Psoas muscle (tissue), 8 donors: ENCODE measurements at regions of chr3 and their contacts with region 1.

Region 1: DNA sequence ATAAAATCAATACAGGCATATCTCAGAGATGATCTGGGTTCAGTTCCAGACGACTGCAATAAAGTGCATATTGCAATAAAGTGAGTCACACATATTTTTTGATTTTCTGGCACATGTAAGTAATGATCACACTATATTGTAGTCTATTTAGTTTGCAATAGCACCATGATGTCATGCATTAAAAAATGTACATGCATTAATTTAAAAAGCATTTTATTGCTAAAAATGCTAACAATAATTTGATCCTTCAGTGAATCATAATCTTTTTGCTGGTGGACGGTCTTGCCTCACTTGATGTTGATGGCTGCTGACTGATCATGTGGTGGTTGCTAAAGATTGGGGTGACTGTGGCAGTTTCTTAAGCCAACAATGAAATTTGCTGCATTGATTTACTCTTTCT is 511.1 kb downstream of the OTOL1 start:
- DNase-seq: no peak
- ATAC-seq: no peak
- H3K4me3 ChIP-seq: no peak overlapping the region
- H3K27ac ChIP-seq: no peak overlapping the region
- H3K4me1 ChIP-seq: no peaks in the 10 kb centered on the region
- H3K27me3 ChIP-seq: no peaks in the 10 kb centered on the region
- CTCF ChIP-seq: no peak

Region 2: GRCh38 chr3:163708428-163708827 is 1700.7 kb after region 1 on chr3:
- intact Hi-C with region 1: loop called in 1 of 2 experiments (anchors 5 kb)
- DNase-seq: no peak
- ATAC-seq: no peak
- H3K4me3 ChIP-seq: no peak overlapping the region
- H3K27ac ChIP-seq: no peak overlapping the region
- H3K4me1 ChIP-seq: no peaks in the 10 kb centered on the region
- H3K27me3 ChIP-seq: no peaks in the 10 kb centered on the region
- CTCF ChIP-seq: no peak